ENCODE measurements at regions of chr14 and their contacts with region 1.

Region 1: GRCh38 chr14:28756884-28757570 is 9.6 kb upstream of the FOXG1 start:
- DNase-seq: peak; percentile 72
- ATAC-seq: peak; percentile 81
- H3K4me3 ChIP-seq: no peak overlapping the region
- H3K27ac ChIP-seq: no peak overlapping the region
- H3K4me1 ChIP-seq: peaks cover 20% of the 10 kb centered on the region
- H3K27me3 ChIP-seq: peaks cover 3 to 71% of the 10 kb centered on the region in 2 experiments; a peak in 3 of 5 replicates
- CTCF ChIP-seq: peak; percentile 86
- EP300 ChIP-seq: 0 out of 4 replicates have a peak, but pooled peaks of 1 of the 2 experiments have one; percentile 26
- POLR2A ChIP-seq: no peak
- RAD21 ChIP-seq: 0 out of 2 replicates have a peak, but pooled peaks have one; percentile 37

Region 2: GRCh38 chr14:28744126-28744525 is 12.9 kb before region 1 on chr14:
- CTCF ChIA-PET with region 1: no interaction called
- POLR2A ChIA-PET with region 1: no interaction called
- in situ Hi-C with region 1: no loop called
- intact Hi-C with region 1: no loop called
- DNase-seq: no peak
- ATAC-seq: no peak
- H3K4me3 ChIP-seq: no peak overlapping the region
- H3K27ac ChIP-seq: no peak overlapping the region
- H3K4me1 ChIP-seq: no peaks in the 10 kb centered on the region
- H3K27me3 ChIP-seq: no peaks in the 10 kb centered on the region; a peak in 1 of 5 replicates
- CTCF ChIP-seq: no peak
- EP300 ChIP-seq: no peak
- POLR2A ChIP-seq: no peak
- RAD21 ChIP-seq: no peak

Region 3: DNA sequence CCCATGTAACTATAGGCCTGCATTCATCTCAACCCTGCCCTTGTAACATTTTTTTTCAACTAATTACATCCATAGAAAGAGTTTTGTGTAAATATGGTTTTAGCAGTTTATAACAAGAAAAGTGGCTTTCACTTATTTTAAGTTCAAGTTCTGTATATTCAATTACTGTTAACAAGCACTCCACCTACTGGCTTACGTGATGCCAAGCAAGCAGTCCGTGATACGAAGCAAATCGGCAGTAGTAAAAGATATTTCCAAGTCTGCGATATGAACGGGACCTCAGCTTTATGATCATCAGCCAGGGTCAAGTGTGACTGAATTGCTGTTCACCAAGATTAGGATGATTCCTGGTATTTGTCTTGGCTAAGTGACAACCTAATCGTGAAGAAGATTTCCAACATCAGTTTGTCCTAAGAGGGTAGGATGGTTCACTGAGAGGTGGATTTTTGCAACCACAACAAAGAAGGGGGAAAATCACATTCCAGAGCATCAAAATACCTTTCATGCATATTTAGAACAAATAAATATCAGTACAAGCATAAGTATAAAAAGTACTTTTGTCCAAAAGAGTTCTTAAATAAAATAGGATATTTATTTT is 465.7 kb after region 1 on chr14:
- CTCF ChIA-PET with region 1: interaction called, 19 read pairs
- POLR2A ChIA-PET with region 1: no interaction called
- in situ Hi-C with region 1: loop called (anchors 5 kb)
- intact Hi-C with region 1: loop called (anchors 1 kb)
- DNase-seq: peak; percentile 63
- ATAC-seq: peak; percentile 91
- H3K4me3 ChIP-seq: no peak overlapping the region
- H3K27ac ChIP-seq: no peak overlapping the region
- H3K4me1 ChIP-seq: no peaks in the 10 kb centered on the region
- H3K27me3 ChIP-seq: no peaks in the 10 kb centered on the region
- CTCF ChIP-seq: peak; percentile 82
- EP300 ChIP-seq: no peak
- POLR2A ChIP-seq: no peak
- RAD21 ChIP-seq: no peak

Region 4: DNA sequence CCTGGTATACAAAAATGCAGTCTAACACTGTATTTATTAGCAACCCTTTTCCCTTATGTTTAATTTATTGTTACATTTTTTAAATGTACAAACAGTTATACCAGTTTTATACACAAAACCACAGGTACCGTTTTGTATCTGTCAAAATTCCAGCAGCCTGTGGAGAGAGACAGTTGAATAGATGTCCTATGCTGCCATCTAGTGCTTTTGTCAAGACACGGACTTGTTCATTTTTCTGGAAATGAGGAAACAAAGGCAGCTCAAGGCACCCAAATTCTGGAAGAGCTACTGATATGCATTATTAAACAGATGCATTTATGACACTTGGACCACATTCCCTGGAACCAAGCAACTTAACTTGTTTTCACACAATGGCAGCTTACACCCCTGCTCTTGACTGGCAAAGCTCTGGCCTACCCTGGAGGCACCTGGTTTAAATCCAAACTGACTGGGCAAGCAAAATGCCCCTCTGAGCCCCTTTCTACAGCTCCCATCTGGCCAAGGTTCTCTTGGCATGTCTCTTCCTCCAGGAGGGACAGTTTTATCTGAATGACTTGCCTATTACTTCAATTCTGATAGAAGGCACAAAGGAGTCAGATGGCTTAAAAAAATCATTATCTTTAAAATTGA is 1457.5 kb after region 1 on chr14:
- CTCF ChIA-PET with region 1: interaction called, 17 read pairs
- POLR2A ChIA-PET with region 1: no interaction called
- in situ Hi-C with region 1: loop called (anchors 5 kb)
- intact Hi-C with region 1: no loop called
- DNase-seq: peak; percentile 75
- ATAC-seq: peak; percentile 91
- H3K4me3 ChIP-seq: no peak overlapping the region
- H3K27ac ChIP-seq: no peak overlapping the region
- H3K4me1 ChIP-seq: no peaks in the 10 kb centered on the region
- H3K27me3 ChIP-seq: no peaks in the 10 kb centered on the region
- CTCF ChIP-seq: peak; percentile 87
- EP300 ChIP-seq: no peak
- POLR2A ChIP-seq: no peak
- RAD21 ChIP-seq: peak; percentile 79